Natural killer cell (primary cell): ENCODE measurements at regions of chr15 and their contacts with region 1.

Region 1: DNA sequence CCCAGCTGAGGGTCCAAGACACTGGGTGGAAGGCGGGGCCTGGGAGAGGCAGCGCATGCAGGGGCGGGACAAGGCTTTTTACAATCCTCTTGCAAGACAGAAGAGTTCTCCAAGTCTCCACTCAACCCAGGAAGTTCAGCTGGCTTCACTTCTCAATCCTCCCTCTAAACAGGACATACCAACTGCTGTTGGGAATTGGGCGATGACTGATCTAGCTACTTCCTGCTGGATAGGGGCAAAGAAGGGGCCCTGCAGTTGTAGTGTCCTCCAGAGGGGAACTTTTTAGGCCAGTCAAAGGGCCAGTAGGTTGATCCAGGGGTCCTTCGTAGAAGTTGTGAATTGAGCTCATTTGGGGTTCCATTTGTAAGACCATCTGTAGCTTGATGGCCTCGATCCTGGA is 94.6 kb upstream of the TERB2 start:
- DNase-seq: no peak
- ATAC-seq: no peak
- H3K4me3 ChIP-seq: no peak overlapping the region
- H3K4me3 Mint-ChIP-seq: no peak overlapping the region
- H3K27ac ChIP-seq: no peak overlapping the region
- H3K27ac Mint-ChIP-seq: no peak overlapping the region
- H3K4me1 ChIP-seq: no peaks in the 10 kb centered on the region
- H3K4me1 Mint-ChIP-seq: no peaks in the 10 kb centered on the region
- H3K27me3 ChIP-seq: no peaks in the 10 kb centered on the region
- H3K27me3 Mint-ChIP-seq: peaks cover 0 to 6% of the 10 kb centered on the region in 2 donors
- CTCF ChIP-seq: no peak

Region 2: GRCh38 chr15:45027220-45027619 is 165.3 kb after region 1 on chr15:
- intact Hi-C with region 1: loop called (anchors 2 kb)
- DNase-seq: no peak
- ATAC-seq: no peak
- H3K4me3 ChIP-seq: no peak overlapping the region
- H3K4me3 Mint-ChIP-seq: no peak overlapping the region
- H3K27ac ChIP-seq: no peak overlapping the region
- H3K27ac Mint-ChIP-seq: no peak overlapping the region
- H3K4me1 ChIP-seq: peaks cover 15% of the 10 kb centered on the region
- H3K4me1 Mint-ChIP-seq: peaks cover 8 to 12% of the 10 kb centered on the region in 2 donors
- H3K27me3 ChIP-seq: no peaks in the 10 kb centered on the region
- H3K27me3 Mint-ChIP-seq: no peaks in the 10 kb centered on the region
- CTCF ChIP-seq: no peak